ENCODE measurements at regions of chr12 and their contacts with region 1.

Region 1: DNA sequence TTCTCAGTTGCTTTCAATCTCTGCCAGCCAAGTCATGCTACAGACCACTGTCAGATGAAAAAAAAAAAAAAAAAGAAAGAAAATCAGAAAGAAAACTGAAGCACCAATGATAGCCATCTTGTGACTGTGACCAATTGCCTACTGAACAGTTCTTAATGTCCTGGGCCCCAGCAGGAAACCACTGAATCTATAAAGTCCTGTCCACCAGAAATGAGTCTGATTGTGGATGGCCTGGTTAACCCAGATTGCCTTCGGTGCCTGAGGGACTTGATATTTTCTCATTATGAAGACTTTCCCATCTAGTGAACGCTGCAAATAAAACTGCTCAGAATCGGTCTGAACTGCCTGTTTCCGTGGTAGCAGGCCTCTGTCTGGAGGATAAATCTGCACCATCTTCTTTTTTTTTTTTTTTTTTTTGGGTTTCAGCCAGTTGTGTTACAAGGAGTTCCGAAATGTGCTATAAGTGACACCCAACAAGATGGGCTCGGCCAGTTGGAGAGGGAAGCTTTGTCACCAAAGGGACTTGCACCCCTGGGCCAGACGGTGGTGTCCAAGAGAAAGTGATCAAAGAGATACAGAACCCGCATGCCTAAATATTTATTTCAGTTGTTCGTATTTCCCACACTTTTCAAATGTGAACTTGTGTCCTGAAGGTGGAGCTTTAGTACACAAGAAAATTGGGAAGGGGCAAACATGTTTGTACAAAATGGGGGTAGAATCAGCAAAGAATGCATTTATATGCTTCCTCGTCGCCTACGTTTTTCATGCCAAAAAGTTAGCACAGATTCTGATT is 3.0 kb upstream of the PLXNC1 start:
- DNase-seq: no peak
- H3K4me3 ChIP-seq: no peak overlapping the region
- H3K27ac ChIP-seq: no peak overlapping the region
- H3K4me1 ChIP-seq: peaks cover 2 to 15% (median 5%) of the 10 kb centered on the region in 4 experiments
- H3K27me3 ChIP-seq: peaks cover 28 to 46% (median 37%) of the 10 kb centered on the region in 4 experiments
- CTCF ChIP-seq: peak in 1 of 3 experiments; percentile 2; a peak in 1 of 4 replicates
- EP300 ChIP-seq: no peak
- POLR2A ChIP-seq: no peak
- RAD21 ChIP-seq: peak; percentile 47 to 50

Region 2: GRCh38 chr12:94195443-94195842 is 50.1 kb after region 1 on chr12:
- CTCF ChIA-PET with region 1: interaction called, 17 read pairs
- POLR2A ChIA-PET with region 1: no interaction called
- DNase-seq: no peak
- H3K4me3 ChIP-seq: no peak overlapping the region
- H3K27ac ChIP-seq: no peak overlapping the region
- H3K4me1 ChIP-seq: no peaks in the 10 kb centered on the region
- H3K27me3 ChIP-seq: no peaks in the 10 kb centered on the region
- CTCF ChIP-seq: peak in 2 of 3 experiments; percentile 23 to 28; a peak in 2 of 4 replicates
- EP300 ChIP-seq: no peak
- POLR2A ChIP-seq: no peak
- RAD21 ChIP-seq: peak in 1 of 2 experiments; percentile 32; a peak in 1 of 4 replicates

Region 3: GRCh38 chr12:94532490-94533422 is 387.4 kb after region 1 on chr12:
- CTCF ChIA-PET with region 1: interaction called, 80 read pairs
- POLR2A ChIA-PET with region 1: interaction called, 3 read pairs
- DNase-seq: peak; percentile 59 to 92
- H3K4me3 ChIP-seq: no peak overlapping the region; a peak in 1 of 8 replicates
- H3K27ac ChIP-seq: no peak overlapping the region
- H3K4me1 ChIP-seq: peaks cover 0 to 2% (median 0%) of the 10 kb centered on the region in 4 experiments; a peak in 2 of 7 replicates
- H3K27me3 ChIP-seq: no peaks in the 10 kb centered on the region
- CTCF ChIP-seq: peak; percentile 89 to 90 (median 89)
- EP300 ChIP-seq: no peak
- POLR2A ChIP-seq: no peak
- RAD21 ChIP-seq: peak; percentile 99

Measured in H1 (cell line).